PC-3 (cell line): ENCODE measurements at regions of chr5 and their contacts with region 1.

Region 1: DNA sequence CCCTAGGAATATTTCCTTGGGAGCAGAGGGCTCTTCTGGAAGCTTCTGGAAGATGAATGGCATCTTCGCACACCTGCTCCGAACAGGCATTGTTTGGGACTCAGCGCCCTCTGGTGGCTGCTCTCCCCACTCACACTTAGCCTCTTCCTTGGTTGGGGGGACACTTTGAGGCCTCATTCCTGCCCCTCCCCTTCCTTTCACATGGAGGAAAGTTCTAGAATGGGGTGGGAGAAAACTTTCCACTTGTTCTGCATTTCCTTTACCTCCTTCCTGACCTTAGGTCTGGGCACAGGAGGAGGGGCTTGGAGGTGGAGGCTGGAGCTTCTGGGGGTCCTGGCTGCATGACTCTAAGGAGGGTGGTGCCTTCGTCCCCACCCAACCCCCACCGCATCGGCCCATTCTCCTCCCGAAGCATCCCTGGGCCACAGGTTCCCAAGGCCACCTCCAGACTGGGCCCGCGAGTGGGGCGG is 19.3 kb upstream of the SMIM32 start:
- DNase-seq: peak; percentile 55
- ATAC-seq: peak; percentile 66; the same call in 1 of the 2 replicates
- H3K4me3 ChIP-seq: no peak overlapping the region
- H3K27ac ChIP-seq: no peak overlapping the region
- H3K4me1 ChIP-seq: no peaks in the 10 kb centered on the region
- H3K27me3 ChIP-seq: peaks cover 8% of the 10 kb centered on the region; the same call in 1 of the 2 replicates
- CTCF ChIP-seq: peak; percentile 90

Region 2: GRCh38 chr5:135887351-135887864 is 324.9 kb before region 1 on chr5:
- CTCF ChIA-PET with region 1: interaction called, 3 read pairs
- POLR2A ChIA-PET with region 1: no interaction called
- intact Hi-C with region 1: loop called (anchors 1 kb)
- DNase-seq: peak; percentile 80
- ATAC-seq: peak; percentile 99
- H3K4me3 ChIP-seq: no peak overlapping the region
- H3K27ac ChIP-seq: no peak overlapping the region
- H3K4me1 ChIP-seq: peaks cover 5% of the 10 kb centered on the region; the same call in 1 of the 2 replicates
- H3K27me3 ChIP-seq: no peaks in the 10 kb centered on the region
- CTCF ChIP-seq: peak; percentile 79

Region 3: DNA sequence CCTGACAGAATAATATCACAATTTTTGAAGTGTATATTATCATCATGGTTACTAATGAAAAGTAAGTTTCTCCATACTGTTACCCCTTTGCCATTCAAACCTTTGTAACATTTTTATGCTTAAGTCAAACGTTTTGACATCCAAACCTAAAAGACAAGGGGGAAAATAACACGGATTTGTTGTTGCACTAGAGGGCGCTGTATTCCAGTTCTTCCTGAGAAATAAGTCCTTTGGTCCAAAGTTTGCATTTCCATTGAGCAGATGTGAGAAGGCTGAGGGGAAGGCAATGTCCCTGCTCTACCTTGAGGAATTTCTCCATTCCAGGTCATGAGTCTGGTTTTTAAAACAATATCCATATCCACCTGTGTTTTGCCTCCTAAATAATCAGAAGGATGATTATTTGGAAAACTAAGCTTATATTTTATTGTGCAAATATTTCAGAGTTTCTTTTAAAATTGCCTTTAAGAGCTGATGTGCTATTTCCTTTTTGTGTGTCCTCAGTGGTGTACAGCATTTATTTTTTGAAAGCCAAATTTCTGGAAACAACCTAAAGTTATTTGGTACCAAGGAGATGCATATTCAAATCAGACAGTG is 267.2 kb before region 1 on chr5:
- CTCF ChIA-PET with region 1: no interaction called
- POLR2A ChIA-PET with region 1: no interaction called
- intact Hi-C with region 1: loop called (anchors 2 kb)
- DNase-seq: peak; percentile 80
- ATAC-seq: peak; percentile 46
- H3K4me3 ChIP-seq: no peak overlapping the region
- H3K27ac ChIP-seq: no peak overlapping the region
- H3K4me1 ChIP-seq: no peaks in the 10 kb centered on the region
- H3K27me3 ChIP-seq: no peaks in the 10 kb centered on the region
- CTCF ChIP-seq: peak; percentile 80

Region 4: DNA sequence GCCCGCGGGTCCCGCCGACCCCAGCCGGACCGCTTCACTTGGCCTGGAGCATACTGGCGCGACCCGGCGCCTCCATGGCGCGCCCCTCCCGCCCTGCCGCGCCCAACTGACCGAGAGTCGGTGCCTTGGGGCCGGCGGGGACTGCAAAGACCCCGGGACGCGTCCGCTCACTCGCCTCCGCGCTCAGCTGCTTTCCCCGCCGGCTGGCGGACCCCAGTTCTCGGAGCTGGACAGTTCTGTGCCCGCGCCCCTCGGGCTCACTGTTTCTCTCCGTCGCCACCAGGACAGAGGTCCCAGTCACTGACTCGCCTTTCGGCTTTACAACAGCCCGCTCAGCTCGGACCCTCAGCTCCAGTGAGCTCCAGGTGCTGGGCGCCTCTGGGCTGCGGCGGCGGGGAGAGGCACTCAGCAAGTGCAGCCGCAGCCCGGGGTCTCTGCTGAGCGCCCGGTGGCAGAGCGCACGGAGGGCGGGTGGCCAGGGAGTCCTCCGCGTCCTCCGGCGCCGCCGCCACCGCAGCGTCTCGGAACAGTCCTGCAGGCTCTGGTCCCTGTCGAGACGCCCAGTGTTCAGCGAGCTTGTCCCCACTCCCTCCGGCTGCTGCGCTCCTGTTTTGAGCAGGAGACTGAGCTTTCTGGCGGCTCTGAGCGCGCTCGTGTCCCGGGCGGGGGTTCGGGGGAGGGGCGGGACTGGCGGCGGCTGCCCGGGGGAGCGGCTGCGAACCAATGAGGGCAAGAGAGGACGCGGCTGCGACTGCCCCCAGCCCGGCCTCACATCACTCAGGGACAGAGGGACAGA is 19.6 kb before region 1 on chr5 and contains the start of gene SMIM32:
- CTCF ChIA-PET with region 1: no interaction called
- POLR2A ChIA-PET with region 1: interaction called, 10 read pairs
- intact Hi-C with region 1: no loop called
- DNase-seq: no peak
- ATAC-seq: no peak
- H3K4me3 ChIP-seq: no peak within 1 kb of the TSS
- H3K27ac ChIP-seq: no peak within 1 kb of the TSS
- H3K4me1 ChIP-seq: no peaks in the 10 kb centered on the region
- H3K27me3 ChIP-seq: no peaks in the 10 kb centered on the region
- CTCF ChIP-seq: no peak
- total RNA-seq, gene SMIM32: not detected in 2 replicates